A549 (cell line): ENCODE measurements at regions of chr5 and their contacts with region 1.

Region 1: GRCh38 chr5:42908509-42909488 is 97.1 kb upstream of the SELENOP start:
- DNase-seq: peak; percentile 83 to 89
- ATAC-seq: peak; percentile 87 to 94
- H3K4me3 ChIP-seq: peak overlapping the region; percentile 42
- H3K27ac ChIP-seq: peak overlapping the region; percentile 32 to 64; a peak in 4 of 6 replicates
- H3K4me1 ChIP-seq: peaks cover 4% of the 10 kb centered on the region; the same call in 1 of the 3 replicates
- CTCF ChIP-seq: peak; percentile 88
- EP300 ChIP-seq: no peak
- POLR2A ChIP-seq: no peak
- RAD21 ChIP-seq: peak; percentile 73 to 80

Region 2: DNA sequence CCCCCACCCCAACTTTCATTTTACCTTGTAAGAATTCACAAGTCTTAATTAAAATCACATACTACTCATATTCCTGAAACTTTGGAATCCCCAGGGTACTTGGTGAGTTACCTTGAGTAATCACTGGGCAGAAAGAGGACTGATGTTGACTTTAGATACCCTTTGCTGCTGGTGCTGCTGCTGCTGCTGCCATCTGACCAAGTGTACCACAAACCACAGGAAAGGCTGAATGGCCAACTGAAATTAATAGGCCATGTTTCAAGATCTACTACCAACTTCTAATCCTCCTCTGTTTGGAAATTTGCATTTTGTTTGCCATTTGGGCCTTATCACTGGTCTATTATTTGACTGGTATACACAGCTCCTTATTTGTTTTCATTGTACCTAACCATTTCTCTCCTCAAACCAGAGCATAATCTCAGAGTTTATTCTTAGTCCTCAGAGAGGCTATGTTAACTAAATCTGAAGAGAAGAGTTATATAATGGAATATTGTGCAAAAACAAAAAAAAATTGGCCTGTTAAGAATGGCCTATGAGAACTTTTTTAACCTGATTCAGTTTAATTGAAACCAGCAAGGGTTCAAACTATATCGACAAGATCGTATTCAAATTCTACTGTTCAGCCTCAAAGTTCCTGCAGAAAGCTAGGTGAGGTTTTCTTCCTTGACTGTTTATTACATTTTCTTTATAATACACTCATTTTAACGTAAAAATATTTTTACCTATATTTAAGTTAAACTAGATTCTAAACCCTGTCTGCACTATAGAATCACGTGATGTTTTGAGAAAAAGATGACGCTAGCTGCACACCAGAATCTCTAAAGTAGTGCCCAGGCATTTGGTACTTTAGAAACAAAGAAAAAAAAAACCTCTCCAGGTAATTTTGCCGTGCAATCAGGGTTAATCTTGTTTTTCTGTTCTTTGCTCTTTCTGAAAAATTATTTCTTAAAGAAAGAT is 110.2 kb before region 1 on chr5:
- CTCF ChIA-PET with region 1: no interaction called
- POLR2A ChIA-PET with region 1: no interaction called
- DNase-seq: no peak
- ATAC-seq: no peak
- H3K4me3 ChIP-seq: no peak overlapping the region
- H3K27ac ChIP-seq: no peak overlapping the region
- H3K4me1 ChIP-seq: no peaks in the 10 kb centered on the region
- CTCF ChIP-seq: no peak
- EP300 ChIP-seq: no peak
- POLR2A ChIP-seq: no peak
- RAD21 ChIP-seq: no peak

Region 3: GRCh38 chr5:42874621-42875198 is 34.1 kb before region 1 on chr5:
- CTCF ChIA-PET with region 1: no interaction called
- POLR2A ChIA-PET with region 1: no interaction called
- DNase-seq: no peak
- ATAC-seq: no peak
- H3K4me3 ChIP-seq: no peak overlapping the region
- H3K27ac ChIP-seq: no peak overlapping the region
- H3K4me1 ChIP-seq: no peaks in the 10 kb centered on the region
- CTCF ChIP-seq: no peak
- EP300 ChIP-seq: no peak
- POLR2A ChIP-seq: no peak
- RAD21 ChIP-seq: no peak

Region 4: DNA sequence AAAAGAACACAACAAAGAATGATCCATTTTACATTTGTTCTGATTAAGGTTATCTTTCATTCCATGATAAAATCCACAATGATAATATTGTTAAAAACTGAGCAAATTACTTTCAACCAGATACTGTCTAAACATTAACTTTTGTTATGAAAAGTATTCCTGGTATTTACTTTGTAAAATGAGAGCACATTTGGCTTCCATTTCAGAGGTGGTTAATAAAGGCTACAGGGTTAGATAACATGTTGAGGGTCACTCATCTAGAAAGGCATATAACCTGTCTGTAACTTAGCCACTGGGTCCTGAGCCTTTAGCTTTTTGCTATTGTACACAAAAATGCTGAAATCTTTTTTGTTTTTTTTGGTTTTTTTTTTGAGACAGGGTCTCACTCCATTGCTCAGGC is 32.1 kb after region 1 on chr5:
- CTCF ChIA-PET with region 1: interaction called, 82 read pairs
- POLR2A ChIA-PET with region 1: no interaction called
- DNase-seq: no peak
- ATAC-seq: no peak
- H3K4me3 ChIP-seq: no peak overlapping the region
- H3K27ac ChIP-seq: peak overlapping the region in 1 of 2 experiments; percentile 71; a peak in 3 of 6 replicates
- H3K4me1 ChIP-seq: peaks cover 27% of the 10 kb centered on the region
- CTCF ChIP-seq: no peak
- EP300 ChIP-seq: no peak
- POLR2A ChIP-seq: no peak
- RAD21 ChIP-seq: no peak

Region 5: GRCh38 chr5:42982107-42982622 is 73.4 kb after region 1 on chr5:
- CTCF ChIA-PET with region 1: interaction called, 25 read pairs
- POLR2A ChIA-PET with region 1: no interaction called
- DNase-seq: peak in 1 of 2 experiments; percentile 79
- ATAC-seq: peak in 1 of 2 experiments; percentile 21; a peak in 2 of 6 replicates
- H3K4me3 ChIP-seq: no peak overlapping the region
- H3K27ac ChIP-seq: peak overlapping the region; percentile 77 to 85
- H3K4me1 ChIP-seq: peaks cover 45% of the 10 kb centered on the region
- CTCF ChIP-seq: no peak
- EP300 ChIP-seq: no peak
- POLR2A ChIP-seq: no peak
- RAD21 ChIP-seq: no peak

Region 6: DNA sequence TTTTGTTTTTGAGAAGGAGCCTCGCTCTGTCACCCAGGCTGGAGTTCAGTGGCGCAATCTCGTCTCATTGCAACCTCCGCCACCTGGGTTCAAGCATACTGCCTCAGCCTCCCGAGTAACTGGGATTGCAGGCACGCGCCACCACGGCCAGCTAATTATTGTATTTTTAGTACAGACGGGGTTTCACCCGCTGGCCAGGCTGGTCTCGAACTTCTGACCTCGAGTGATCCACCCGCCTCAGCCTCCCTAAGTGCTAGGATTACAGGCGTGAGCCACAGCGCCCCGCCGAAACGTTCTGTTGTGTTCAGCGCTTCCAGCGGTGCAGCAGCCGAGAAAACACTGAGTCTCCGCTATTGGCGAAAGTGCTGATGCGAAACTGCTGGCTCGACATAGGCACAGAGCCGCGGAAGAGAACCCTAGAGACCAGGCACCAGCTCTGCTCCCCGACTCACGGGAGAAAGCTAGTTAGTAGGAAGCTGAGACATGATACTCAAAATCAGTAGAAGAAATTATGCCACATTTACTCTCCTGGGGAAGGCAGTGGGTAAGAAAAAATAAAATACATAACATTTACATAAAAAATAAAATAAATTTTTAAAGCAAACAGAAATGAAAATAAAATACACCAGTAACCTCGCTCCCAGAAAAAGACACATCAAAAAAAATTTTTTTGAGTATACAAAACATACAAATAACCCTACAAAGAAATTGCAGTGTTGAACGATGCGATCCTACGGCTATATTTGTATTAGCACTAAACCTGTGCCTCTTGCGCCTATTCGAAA is 99.8 kb after region 1 on chr5:
- CTCF ChIA-PET with region 1: interaction called, 23 read pairs
- POLR2A ChIA-PET with region 1: interaction called, 18 read pairs
- DNase-seq: peak; percentile 84 to 98
- ATAC-seq: peak; percentile 81 to 85
- H3K4me3 ChIP-seq: peak overlapping the region; percentile 56
- H3K27ac ChIP-seq: peak overlapping the region; percentile 93 to 95
- H3K4me1 ChIP-seq: peaks cover 13% of the 10 kb centered on the region
- CTCF ChIP-seq: peak; percentile 34
- EP300 ChIP-seq: no peak
- POLR2A ChIP-seq: peak; percentile 64
- RAD21 ChIP-seq: peak in 1 of 2 experiments; percentile 34; a peak in 3 of 5 replicates

Region 7: GRCh38 chr5:43040287-43041098 is 131.7 kb after region 1 on chr5 and contains the start of gene ANXA2R:
- CTCF ChIA-PET with region 1: interaction called, 75 read pairs
- POLR2A ChIA-PET with region 1: interaction called, 5 read pairs
- DNase-seq: peak; percentile 67 to 97
- ATAC-seq: peak; percentile 41 to 71
- H3K4me3 ChIP-seq: peak within 1 kb of the TSS; percentile 50
- H3K27ac ChIP-seq: peak within 1 kb of the TSS; percentile 85 to 93
- H3K4me1 ChIP-seq: peaks cover 6% of the 10 kb centered on the region; the same call in 2 of the 3 replicates
- CTCF ChIP-seq: peak; percentile 53
- EP300 ChIP-seq: no peak
- POLR2A ChIP-seq: no peak
- RAD21 ChIP-seq: peak; percentile 68 to 81
- polyA plus RNA-seq, gene ANXA2R: 1.7 and 1.8 TPM in 2 replicates

Region 8: GRCh38 chr5:43078986-43079355 is 170.2 kb after region 1 on chr5:
- CTCF ChIA-PET with region 1: no interaction called
- POLR2A ChIA-PET with region 1: no interaction called
- DNase-seq: peak in 1 of 2 experiments; percentile 39
- ATAC-seq: peak; percentile 68 to 78
- H3K4me3 ChIP-seq: no peak overlapping the region
- H3K27ac ChIP-seq: no peak overlapping the region
- H3K4me1 ChIP-seq: peaks cover 8% of the 10 kb centered on the region
- CTCF ChIP-seq: no peak
- EP300 ChIP-seq: no peak
- POLR2A ChIP-seq: no peak
- RAD21 ChIP-seq: no peak

Region 9: GRCh38 chr5:43120720-43121564 is 212.1 kb after region 1 on chr5 and contains the start of gene ZNF131:
- CTCF ChIA-PET with region 1: interaction called, 3 read pairs
- POLR2A ChIA-PET with region 1: interaction called, 10 read pairs
- DNase-seq: peak; percentile 86 to 98
- ATAC-seq: peak; percentile 94 to 95
- H3K4me3 ChIP-seq: peak within 1 kb of the TSS; percentile 78
- H3K27ac ChIP-seq: peak within 1 kb of the TSS; percentile 96 to 97
- H3K4me1 ChIP-seq: peaks cover 20% of the 10 kb centered on the region; the same call in 2 of the 3 replicates
- CTCF ChIP-seq: no peak
- EP300 ChIP-seq: no peak
- POLR2A ChIP-seq: peak; percentile 80
- RAD21 ChIP-seq: no peak
- polyA plus RNA-seq, gene ZNF131: 37.5 and 47.9 TPM in 2 replicates

Region 10: DNA sequence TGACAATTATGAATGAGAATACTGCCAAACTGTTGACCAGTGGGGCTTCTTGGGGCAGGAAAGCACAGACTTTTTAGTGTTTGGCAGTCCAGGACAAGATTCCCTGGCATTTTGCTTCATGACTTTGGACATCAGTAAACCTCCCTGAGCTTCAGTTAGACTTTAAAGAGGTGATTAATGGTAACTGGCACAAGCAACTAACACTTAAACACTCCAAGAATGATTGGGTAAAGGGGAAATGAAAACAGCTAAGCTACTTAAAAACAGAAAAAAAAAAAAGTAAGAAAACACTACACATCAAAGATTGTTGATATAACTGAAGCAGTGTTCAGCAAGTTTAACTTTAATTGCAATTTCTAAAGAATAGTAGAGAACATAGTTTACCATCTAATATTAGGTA is 634.6 kb after region 1 on chr5:
- CTCF ChIA-PET with region 1: no interaction called
- POLR2A ChIA-PET with region 1: no interaction called
- DNase-seq: no peak
- ATAC-seq: no peak
- H3K4me3 ChIP-seq: no peak overlapping the region
- H3K27ac ChIP-seq: no peak overlapping the region
- H3K4me1 ChIP-seq: no peaks in the 10 kb centered on the region
- CTCF ChIP-seq: no peak
- EP300 ChIP-seq: no peak
- POLR2A ChIP-seq: no peak
- RAD21 ChIP-seq: no peak